BJ (cell line): ENCODE measurements at regions of chr12 and their contacts with region 1.

Region 1: GRCh38 chr12:49967042-49967776 is 5.5 kb downstream of the AQP5 start:
- DNase-seq: no peak
- H3K4me3 ChIP-seq: peak overlapping the region; percentile 38
- H3K27me3 ChIP-seq: peaks cover 44% of the 10 kb centered on the region
- CTCF ChIP-seq: peak; percentile 90

Region 2: GRCh38 chr12:49945394-49946080 is 21.7 kb before region 1 on chr12:
- CTCF ChIA-PET with region 1: interaction called, 48 read pairs
- POLR2A ChIA-PET with region 1: no interaction called
- DNase-seq: peak; percentile 9
- H3K4me3 ChIP-seq: no peak overlapping the region
- H3K27me3 ChIP-seq: peaks cover 5% of the 10 kb centered on the region
- CTCF ChIP-seq: peak; percentile 93

Region 3: DNA sequence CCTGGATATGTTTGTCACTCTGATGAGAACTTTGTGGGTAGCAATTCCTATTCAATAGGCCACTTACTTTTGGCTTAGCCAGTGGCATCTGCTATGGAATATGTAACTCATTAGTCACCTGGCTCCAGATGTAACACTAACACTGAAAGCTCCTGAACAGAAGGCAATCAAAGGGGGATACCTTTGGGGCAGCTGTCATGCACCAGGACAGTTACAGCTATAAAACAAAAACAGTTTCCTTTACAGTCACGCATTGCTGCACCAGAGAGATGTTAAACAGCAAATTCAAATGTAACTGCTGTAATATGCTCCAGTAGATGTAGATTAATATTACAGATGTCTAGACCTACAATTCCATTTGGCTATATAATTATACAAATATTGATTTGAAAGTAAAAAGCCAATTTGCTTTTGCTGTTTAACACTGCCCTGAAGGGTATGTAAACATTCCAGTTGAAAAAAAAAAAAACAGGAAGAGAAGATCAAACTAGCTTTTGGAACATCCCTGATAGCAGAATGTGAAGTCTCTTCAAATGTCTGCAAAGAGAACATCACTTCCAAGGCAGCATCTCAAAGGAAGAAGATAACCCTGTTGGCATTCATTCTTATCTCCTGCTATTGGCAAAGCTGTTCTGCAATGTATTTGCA is 39.7 kb after region 1 on chr12:
- CTCF ChIA-PET with region 1: interaction called, 12 read pairs
- POLR2A ChIA-PET with region 1: no interaction called
- DNase-seq: no peak
- H3K4me3 ChIP-seq: no peak overlapping the region
- H3K27me3 ChIP-seq: no peaks in the 10 kb centered on the region
- CTCF ChIP-seq: no peak

Region 4: DNA sequence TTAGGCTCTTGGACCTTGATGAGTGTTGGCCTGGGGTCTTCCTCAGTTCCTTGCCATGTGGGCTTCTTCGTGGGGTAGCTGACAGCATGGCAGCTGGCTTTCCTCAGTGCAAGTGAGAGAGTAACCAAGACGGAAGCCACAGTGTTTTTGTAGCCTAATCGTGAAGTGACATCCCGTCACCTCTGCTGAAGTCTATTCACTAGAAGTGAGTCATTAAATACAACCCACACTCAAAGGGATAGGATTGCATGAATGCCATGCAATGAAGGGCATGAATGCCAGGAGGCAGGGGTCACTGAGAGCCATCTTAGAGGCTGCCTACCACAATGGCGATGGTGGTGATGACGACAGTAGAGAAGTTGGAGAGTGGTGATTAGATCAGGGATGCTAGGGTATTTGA is 76.6 kb after region 1 on chr12:
- CTCF ChIA-PET with region 1: interaction called, 301 read pairs
- POLR2A ChIA-PET with region 1: no interaction called
- DNase-seq: no peak
- H3K4me3 ChIP-seq: no peak overlapping the region
- H3K27me3 ChIP-seq: peaks cover 2% of the 10 kb centered on the region
- CTCF ChIP-seq: no peak

Region 5: GRCh38 chr12:50084775-50085614 is 117.8 kb after region 1 on chr12 and contains the start of gene SMARCD1:
- CTCF ChIA-PET with region 1: interaction called, 12 read pairs
- POLR2A ChIA-PET with region 1: no interaction called
- DNase-seq: peak; percentile 48
- H3K4me3 ChIP-seq: peak within 1 kb of the TSS; percentile 62
- H3K27me3 ChIP-seq: no peaks in the 10 kb centered on the region; the same call in 1 of the 2 replicates
- CTCF ChIP-seq: peak; percentile 78
- polyA plus RNA-seq, gene SMARCD1: 48.9 and 56.0 TPM in 2 replicates